Cardiac septum (tissue), 1 donor: ENCODE measurements at regions of chr2 and their contacts with region 1.

Region 1: DNA sequence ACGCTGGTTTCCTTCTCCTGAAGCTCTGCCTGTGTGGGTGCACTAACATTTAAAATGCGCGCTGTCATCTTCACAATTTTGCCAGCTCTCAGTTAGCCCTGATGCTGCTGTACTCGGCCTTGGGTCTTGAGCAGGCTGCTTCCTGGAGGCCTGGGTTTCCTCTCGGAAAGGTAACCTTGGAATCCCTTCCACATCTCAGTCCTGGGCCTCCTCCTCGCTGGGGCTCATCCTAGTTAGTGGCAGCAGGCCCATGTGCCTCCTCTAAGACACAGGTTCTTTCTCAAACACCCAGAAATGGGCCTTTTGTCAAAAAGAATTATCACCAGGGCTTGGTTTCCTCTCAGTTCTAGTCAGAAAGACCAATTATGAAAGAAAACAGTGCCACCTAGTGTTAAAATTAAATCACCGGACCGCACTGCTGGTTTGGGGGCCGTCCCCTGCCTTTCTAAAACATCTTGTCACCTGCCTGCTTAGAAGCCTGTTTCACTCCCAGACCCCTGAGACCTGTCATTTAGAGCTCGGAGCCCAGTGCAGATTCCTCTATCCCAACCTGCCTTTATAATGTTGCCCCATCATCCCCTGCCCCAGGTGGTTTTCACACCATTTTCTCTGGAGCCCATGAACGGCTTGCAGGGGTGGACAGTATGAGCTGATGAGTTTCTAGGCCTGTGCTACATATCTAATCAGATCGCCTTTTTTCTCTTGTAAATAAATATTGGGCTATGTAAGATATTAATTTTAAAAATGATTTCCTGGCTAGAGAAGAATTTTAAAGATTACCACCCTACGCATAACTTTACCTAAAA is 42.4 kb downstream of the HK2 start:
- DNase-seq: no peak

Region 2: GRCh38 chr2:74690571-74690970 is 185.7 kb before region 1 on chr2:
- intact Hi-C with region 1: loop called (anchors 2 kb)
- DNase-seq: no peak

Region 3: GRCh38 chr2:74715078-74715791 is 161.0 kb before region 1 on chr2:
- intact Hi-C with region 1: loop called (anchors 1 kb)
- DNase-seq: peak; percentile 93

Region 4: DNA sequence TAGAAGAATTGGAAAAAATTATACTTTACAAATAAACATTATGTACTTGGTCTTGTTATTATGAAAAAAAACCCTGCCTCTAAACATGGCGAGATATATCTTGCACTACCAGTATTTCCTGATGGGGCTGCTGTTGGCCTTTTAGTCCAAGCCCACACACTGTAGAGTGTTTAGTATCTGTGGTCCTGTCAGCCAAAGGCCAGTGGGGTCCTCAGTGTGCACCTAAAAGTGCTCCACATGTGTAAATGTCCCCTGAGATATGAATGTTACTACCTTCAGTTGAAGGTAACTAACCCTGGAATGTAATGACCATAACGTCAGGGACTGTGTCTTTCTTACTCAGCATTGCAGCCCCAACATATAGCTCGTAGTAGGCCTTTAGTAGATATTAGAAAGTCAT is 113.5 kb before region 1 on chr2:
- intact Hi-C with region 1: no loop called
- DNase-seq: no peak

Region 5: GRCh38 chr2:74833418-74834233 is 42.7 kb before region 1 on chr2 and contains the start of gene HK2:
- intact Hi-C with region 1: loop called (anchors 5 kb)
- DNase-seq: peak; percentile 93
- total RNA-seq, gene HK2: 15.5 TPM